ENCODE measurements at regions of chr11 and their contacts with region 1.

Region 1: GRCh38 chr11:120682866-120683265 is 171.3 kb downstream of the GRIK4 start:
- DNase-seq: no peak
- ATAC-seq: no peak
- H3K4me3 Mint-ChIP-seq: no peak overlapping the region
- H3K27ac Mint-ChIP-seq: no peak overlapping the region
- H3K4me1 Mint-ChIP-seq: peaks cover 22% of the 10 kb centered on the region
- H3K27me3 Mint-ChIP-seq: no peaks in the 10 kb centered on the region
- CTCF ChIP-seq: no peak

Region 2: GRCh38 chr11:120511116-120511819 is 171.6 kb before region 1 on chr11 and contains the start of gene GRIK4:
- CTCF ChIA-PET with region 1: interaction called, 20 read pairs
- POLR2A ChIA-PET with region 1: no interaction called
- DNase-seq: peak; percentile 92
- ATAC-seq: peak; percentile 87
- H3K4me3 Mint-ChIP-seq: peak within 1 kb of the TSS; percentile 61
- H3K27ac Mint-ChIP-seq: no peak within 1 kb of the TSS
- H3K4me1 Mint-ChIP-seq: peaks cover 11% of the 10 kb centered on the region
- H3K27me3 Mint-ChIP-seq: peaks cover 25% of the 10 kb centered on the region
- CTCF ChIP-seq: peak; percentile 92
- total RNA-seq, gene GRIK4: 2.9 to 3.6 TPM (median 3.3 TPM) in 3 replicates

Region 3: GRCh38 chr11:120539667-120540369 is 143.0 kb before region 1 on chr11:
- CTCF ChIA-PET with region 1: interaction called, 10 read pairs
- POLR2A ChIA-PET with region 1: no interaction called
- DNase-seq: no peak
- ATAC-seq: no peak
- H3K4me3 Mint-ChIP-seq: no peak overlapping the region
- H3K27ac Mint-ChIP-seq: no peak overlapping the region
- H3K4me1 Mint-ChIP-seq: peaks cover 6% of the 10 kb centered on the region
- H3K27me3 Mint-ChIP-seq: no peaks in the 10 kb centered on the region
- CTCF ChIP-seq: no peak

Region 4: DNA sequence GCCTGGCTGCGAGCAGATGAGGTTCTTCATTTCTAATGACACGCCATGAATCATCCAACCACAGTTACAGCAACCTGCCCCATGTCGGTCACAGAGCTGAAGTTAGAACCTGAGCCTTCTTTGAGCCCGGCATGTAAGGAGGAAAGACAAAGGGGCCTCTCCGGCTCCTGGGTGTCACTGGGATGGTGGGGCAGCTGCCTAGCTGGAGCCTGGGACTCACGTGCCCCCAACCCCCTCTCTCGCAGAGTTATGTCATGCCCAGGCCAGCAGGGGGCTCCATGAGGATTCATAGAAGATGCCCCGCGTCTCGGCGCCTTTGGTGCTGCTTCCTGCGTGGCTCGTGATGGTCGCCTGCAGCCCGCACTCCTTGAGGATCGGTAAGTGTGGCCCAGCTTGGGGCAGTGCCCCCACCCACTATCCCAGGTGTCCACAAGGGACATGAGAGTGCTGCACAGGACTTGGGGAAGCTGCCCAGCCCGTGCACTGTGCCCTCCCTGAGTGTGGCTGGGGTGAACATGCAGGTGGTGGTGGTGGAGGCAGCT is 22.8 kb before region 1 on chr11:
- CTCF ChIA-PET with region 1: interaction called, 67 read pairs
- POLR2A ChIA-PET with region 1: interaction called, 4 read pairs
- DNase-seq: peak; percentile 84
- ATAC-seq: peak; percentile 84
- H3K4me3 Mint-ChIP-seq: no peak overlapping the region
- H3K27ac Mint-ChIP-seq: no peak overlapping the region
- H3K4me1 Mint-ChIP-seq: peaks cover 40% of the 10 kb centered on the region
- H3K27me3 Mint-ChIP-seq: peaks cover 10% of the 10 kb centered on the region
- CTCF ChIP-seq: peak; percentile 67

Region 5: GRCh38 chr11:120710354-120711131 is 27.7 kb after region 1 on chr11:
- CTCF ChIA-PET with region 1: interaction called, 19 read pairs
- POLR2A ChIA-PET with region 1: no interaction called
- DNase-seq: peak; percentile 60
- ATAC-seq: peak; percentile 76
- H3K4me3 Mint-ChIP-seq: no peak overlapping the region
- H3K27ac Mint-ChIP-seq: no peak overlapping the region; the same call in 1 of the 2 replicates
- H3K4me1 Mint-ChIP-seq: peaks cover 38% of the 10 kb centered on the region
- H3K27me3 Mint-ChIP-seq: no peaks in the 10 kb centered on the region; the same call in 1 of the 2 replicates
- CTCF ChIP-seq: no peak

Region 6: DNA sequence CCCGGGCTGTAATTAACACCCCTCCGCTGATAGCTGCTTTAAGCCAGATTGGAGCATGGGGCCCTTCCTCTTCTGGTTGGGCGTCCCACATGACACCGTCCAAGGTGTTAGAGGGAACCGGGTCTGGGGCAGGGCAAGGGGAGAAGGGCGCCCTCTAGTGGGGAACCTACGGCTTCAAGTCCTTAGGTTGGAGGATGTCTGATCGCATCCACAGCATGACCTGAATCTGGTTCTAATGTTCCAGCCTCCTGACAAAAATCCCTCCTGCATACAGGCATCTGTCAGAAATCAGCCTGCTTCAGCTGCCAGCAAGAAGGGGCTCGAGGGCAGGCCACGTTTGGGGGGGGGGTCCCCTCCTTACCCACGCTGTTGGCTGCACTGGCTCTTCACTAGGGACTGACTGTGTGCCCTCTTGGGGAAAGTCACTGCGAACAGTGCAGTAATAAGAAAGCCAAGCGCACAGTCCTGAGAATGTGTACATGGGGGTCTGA is 246.8 kb after region 1 on chr11:
- CTCF ChIA-PET with region 1: interaction called, 21 read pairs
- POLR2A ChIA-PET with region 1: no interaction called
- DNase-seq: peak; percentile 84
- ATAC-seq: peak; percentile 88
- H3K4me3 Mint-ChIP-seq: no peak overlapping the region
- H3K27ac Mint-ChIP-seq: no peak overlapping the region
- H3K4me1 Mint-ChIP-seq: peaks cover 21% of the 10 kb centered on the region
- H3K27me3 Mint-ChIP-seq: no peaks in the 10 kb centered on the region
- CTCF ChIP-seq: peak; percentile 83

Measured in WTC11 (cell line).